ENCODE measurements at regions of chr2 and their contacts with region 1.

Region 1: DNA sequence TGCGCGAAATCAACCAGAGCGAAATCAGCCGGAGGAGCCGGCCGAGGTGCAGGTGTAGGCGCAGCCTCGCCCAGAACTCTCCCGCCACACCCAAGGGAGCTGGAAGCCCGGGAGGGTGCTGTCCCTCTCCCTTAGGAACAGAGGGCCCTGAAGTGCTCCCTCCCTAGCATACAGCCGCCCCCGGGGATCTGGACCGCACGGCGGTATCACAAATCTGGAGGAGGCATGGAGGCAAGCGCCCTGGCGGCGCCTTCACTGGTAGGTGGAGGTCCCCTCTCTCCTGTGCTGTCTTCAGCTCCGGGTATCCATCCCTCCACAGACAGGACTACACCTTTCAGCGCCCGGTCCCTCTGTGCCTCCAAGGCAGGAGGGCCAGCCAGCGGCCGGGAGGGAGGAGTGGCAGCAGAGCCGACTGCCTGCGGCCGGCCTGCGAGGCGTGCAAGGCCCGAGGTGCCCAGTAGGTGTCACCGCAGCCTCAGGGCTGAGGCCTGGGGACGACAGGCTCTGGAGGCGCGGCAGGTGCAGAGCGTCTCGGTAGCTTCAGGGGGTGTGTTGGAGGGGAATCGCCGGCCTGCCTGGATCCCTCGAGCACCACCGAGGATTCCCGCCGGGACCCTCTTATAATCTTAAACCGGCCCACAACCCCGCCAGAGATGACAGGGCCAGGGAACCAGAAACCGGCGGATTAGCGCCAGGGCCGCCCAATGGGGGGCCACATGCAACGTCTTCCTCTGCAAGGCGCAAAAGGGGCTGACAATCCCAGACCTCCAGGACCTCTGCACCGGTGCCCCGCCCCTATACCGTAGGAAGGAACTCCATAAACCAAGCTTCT is 2.8 kb downstream of the IHH start:
- DNase-seq: peak; percentile 44
- H3K4me3 ChIP-seq: no peak overlapping the region
- H3K27ac ChIP-seq: no peak overlapping the region
- H3K4me1 ChIP-seq: peaks cover 24% of the 10 kb centered on the region
- H3K27me3 ChIP-seq: peaks cover 53% of the 10 kb centered on the region
- CTCF ChIP-seq: peak; percentile 63 to 78

Region 2: GRCh38 chr2:218959141-218959731 is 98.7 kb before region 1 on chr2 and contains the start of gene CDK5R2:
- CTCF ChIA-PET with region 1: no interaction called
- dilution Hi-C with region 1: loop called (anchors 5 kb)
- in situ Hi-C with region 1: no loop called
- intact Hi-C with region 1: no loop called
- DNase-seq: peak; percentile 74
- H3K4me3 ChIP-seq: peak within 1 kb of the TSS; percentile 30 to 55 (median 51)
- H3K27ac ChIP-seq: no peak within 1 kb of the TSS
- H3K4me1 ChIP-seq: peaks cover 26% of the 10 kb centered on the region
- H3K27me3 ChIP-seq: peaks cover 28% of the 10 kb centered on the region
- CTCF ChIP-seq: no peak
- total RNA-seq, gene CDK5R2: 0.49 TPM in 1 of 2 donors, not detected in the other

Region 3: GRCh38 chr2:218995972-218996711 is 61.8 kb before region 1 on chr2:
- CTCF ChIA-PET with region 1: no interaction called
- dilution Hi-C with region 1: loop called (anchors 5 kb)
- in situ Hi-C with region 1: no loop called
- intact Hi-C with region 1: no loop called
- DNase-seq: peak; percentile 70
- H3K4me3 ChIP-seq: peak overlapping the region; percentile 26 to 54 (median 49)
- H3K27ac ChIP-seq: no peak overlapping the region
- H3K4me1 ChIP-seq: peaks cover 17% of the 10 kb centered on the region
- H3K27me3 ChIP-seq: peaks cover 6% of the 10 kb centered on the region
- CTCF ChIP-seq: peak; percentile 64 to 90

Region 4: GRCh38 chr2:219020604-219021365 is 37.1 kb before region 1 on chr2:
- CTCF ChIA-PET with region 1: no interaction called
- dilution Hi-C with region 1: no loop called
- in situ Hi-C with region 1: no loop called
- intact Hi-C with region 1: no loop called
- DNase-seq: no peak
- H3K4me3 ChIP-seq: no peak overlapping the region
- H3K27ac ChIP-seq: no peak overlapping the region
- H3K4me1 ChIP-seq: no peaks in the 10 kb centered on the region
- H3K27me3 ChIP-seq: peaks cover 5% of the 10 kb centered on the region
- CTCF ChIP-seq: no peak

Region 5: DNA sequence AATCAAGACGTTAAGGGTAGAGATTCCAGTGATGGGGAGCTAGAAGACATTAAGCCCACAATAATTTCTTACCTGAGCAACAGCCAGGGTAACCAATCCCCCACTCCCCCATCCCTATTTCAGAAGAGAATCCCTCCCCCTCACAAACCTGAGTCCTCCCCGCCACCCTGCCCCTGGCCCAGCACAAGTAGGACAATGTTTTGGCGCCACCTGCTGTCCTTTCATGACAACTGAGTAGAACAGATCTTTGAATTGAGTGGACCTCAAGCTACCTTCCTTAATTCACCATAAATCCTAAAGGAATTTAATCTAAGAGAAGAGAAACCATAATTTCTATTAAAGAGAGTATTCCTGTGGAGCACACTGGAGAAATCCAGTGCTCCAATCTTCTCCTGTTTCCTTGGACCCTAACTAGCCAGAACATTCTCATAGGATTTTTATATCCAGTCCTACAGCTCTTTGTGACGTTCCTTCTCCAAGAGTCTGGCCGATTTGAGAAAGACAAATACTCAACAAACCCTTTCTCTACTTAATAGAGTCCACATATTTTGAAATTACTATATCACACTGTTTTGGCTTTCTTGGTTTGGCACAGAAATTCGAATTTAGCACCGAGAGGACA is 61.6 kb after region 1 on chr2:
- CTCF ChIA-PET with region 1: no interaction called
- dilution Hi-C with region 1: no loop called
- in situ Hi-C with region 1: no loop called
- intact Hi-C with region 1: loop called (anchors 1 kb)
- DNase-seq: peak; percentile 35
- H3K4me3 ChIP-seq: no peak overlapping the region
- H3K27ac ChIP-seq: no peak overlapping the region
- H3K4me1 ChIP-seq: peaks cover 37% of the 10 kb centered on the region
- H3K27me3 ChIP-seq: no peaks in the 10 kb centered on the region
- CTCF ChIP-seq: peak; percentile 67 to 75

Region 6: DNA sequence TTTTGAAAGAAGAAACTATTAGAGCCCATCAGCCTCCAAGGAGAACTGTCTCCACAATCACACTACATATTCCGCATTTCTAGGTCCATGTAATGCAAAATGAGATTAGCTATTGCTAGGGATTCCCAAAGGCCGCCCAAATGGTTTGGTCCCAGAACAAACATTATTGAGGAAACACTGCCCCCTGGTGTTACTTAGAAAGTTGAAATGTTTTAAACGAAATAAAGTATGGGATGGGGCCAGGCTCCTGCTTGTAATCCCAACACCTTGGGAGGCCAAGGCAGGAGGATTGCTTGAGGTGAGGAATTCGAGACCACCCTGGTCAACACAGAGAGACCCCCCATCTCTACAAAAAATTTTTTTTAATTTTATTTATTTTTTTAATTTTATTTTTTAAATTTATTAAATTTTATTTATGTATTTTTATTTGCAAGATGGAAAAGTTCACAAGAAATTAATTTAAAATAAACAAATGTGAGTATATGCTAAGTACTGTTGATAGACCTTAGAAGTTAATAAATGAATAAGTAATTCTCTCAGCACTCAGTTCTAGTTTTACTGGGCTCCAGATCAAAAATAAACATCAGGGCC is 97.2 kb after region 1 on chr2:
- CTCF ChIA-PET with region 1: interaction called, 6 read pairs
- dilution Hi-C with region 1: no loop called
- in situ Hi-C with region 1: no loop called
- intact Hi-C with region 1: loop called (anchors 1 kb)
- DNase-seq: peak; percentile 54
- H3K4me3 ChIP-seq: no peak overlapping the region
- H3K27ac ChIP-seq: no peak overlapping the region
- H3K4me1 ChIP-seq: peaks cover 9% of the 10 kb centered on the region
- H3K27me3 ChIP-seq: no peaks in the 10 kb centered on the region
- CTCF ChIP-seq: peak; percentile 23 to 61

Measured in mammary epithelial cell (primary cell).